Common myeloid progenitor, CD34-positive (primary cell): ENCODE measurements at regions of chr1 and their contacts with region 1.

Region 1: DNA sequence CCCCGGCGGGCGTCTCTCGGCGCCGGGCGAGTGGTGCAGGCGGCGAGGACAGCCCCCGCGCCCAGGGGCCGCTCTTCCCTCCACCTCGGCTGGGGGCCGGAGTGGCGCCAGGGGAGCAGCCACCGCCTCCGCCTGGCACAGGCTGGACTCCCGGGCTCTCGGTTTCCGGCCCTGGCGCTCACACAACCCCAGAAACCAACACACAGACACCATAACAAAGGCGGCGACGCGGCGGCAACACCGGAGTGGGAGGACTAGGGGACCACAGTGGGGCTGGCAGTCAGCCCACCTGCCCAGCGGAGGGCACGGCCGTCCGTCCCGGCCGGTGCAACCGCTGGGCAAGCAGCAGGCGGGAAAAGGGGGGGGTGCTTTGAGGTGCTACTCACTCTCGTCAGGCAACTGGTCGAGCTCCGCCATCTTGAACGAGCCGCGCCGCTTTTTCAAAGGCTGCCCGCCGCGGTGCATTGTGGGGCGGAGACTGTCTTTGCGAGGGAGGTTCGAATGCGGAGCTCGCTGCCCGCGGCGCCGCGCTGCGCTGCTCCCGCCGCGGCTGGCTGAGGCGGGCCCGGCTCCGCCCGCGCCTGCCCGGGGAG is at the start of gene LIN9:
- DNase-seq: peak; percentile 90 to 94 (median 93)
- H3K4me3 ChIP-seq: peak within 1 kb of the TSS; percentile 80 to 100 (median 97)
- H3K27ac ChIP-seq: peak within 1 kb of the TSS; percentile 58 to 88
- H3K4me1 ChIP-seq: peaks cover 4 to 29% (median 19%) of the 10 kb centered on the region in 4 experiments
- H3K27me3 ChIP-seq: no peaks in the 10 kb centered on the region

Region 2: GRCh38 chr1:226201029-226201593 is 107.7 kb before region 1 on chr1:
- CTCF ChIA-PET with region 1: no interaction called
- POLR2A ChIA-PET with region 1: no interaction called
- DNase-seq: peak; percentile 33 to 55 (median 54)
- H3K4me3 ChIP-seq: no peak overlapping the region
- H3K27ac ChIP-seq: no peak overlapping the region
- H3K4me1 ChIP-seq: peaks cover 0 to 3% (median 0%) of the 10 kb centered on the region in 4 experiments
- H3K27me3 ChIP-seq: no peaks in the 10 kb centered on the region

Region 3: DNA sequence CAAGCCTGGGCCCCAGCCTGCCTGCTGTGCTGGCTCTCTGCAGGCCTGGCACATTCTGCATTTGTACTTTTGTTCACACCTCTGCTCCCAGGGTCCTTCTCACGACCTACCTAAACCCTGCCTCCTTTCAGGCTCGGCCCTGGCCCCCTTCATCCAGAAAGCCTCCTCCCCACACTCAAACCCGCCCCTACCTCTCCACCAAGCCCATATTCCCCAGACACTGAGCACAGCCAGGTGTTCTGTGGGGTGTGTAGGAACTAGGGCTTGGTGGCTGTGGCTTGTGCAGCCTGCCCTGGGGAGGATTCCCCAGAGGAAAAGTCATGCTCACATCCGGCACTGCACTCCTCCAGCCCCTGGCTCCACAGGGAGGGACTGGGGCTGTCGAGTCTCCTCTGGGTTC is 93.6 kb before region 1 on chr1:
- CTCF ChIA-PET with region 1: no interaction called
- POLR2A ChIA-PET with region 1: no interaction called
- DNase-seq: no peak
- H3K4me3 ChIP-seq: no peak overlapping the region
- H3K27ac ChIP-seq: no peak overlapping the region
- H3K4me1 ChIP-seq: no peaks in the 10 kb centered on the region
- H3K27me3 ChIP-seq: no peaks in the 10 kb centered on the region

Region 4: GRCh38 chr1:226327761-226328162 is 18.9 kb after region 1 on chr1:
- CTCF ChIA-PET with region 1: interaction called, 32 read pairs
- POLR2A ChIA-PET with region 1: no interaction called
- DNase-seq: peak; percentile 31 to 67 (median 51)
- H3K4me3 ChIP-seq: peak overlapping the region in 1 of 7 experiments; percentile 5
- H3K27ac ChIP-seq: peak overlapping the region; percentile 40 to 52
- H3K4me1 ChIP-seq: peaks cover under 1 to 29% (median 9%) of the 10 kb centered on the region in 4 experiments
- H3K27me3 ChIP-seq: no peaks in the 10 kb centered on the region

Region 5: GRCh38 chr1:226332947-226333346 is 24.1 kb after region 1 on chr1:
- CTCF ChIA-PET with region 1: interaction called, 32 read pairs
- POLR2A ChIA-PET with region 1: no interaction called
- DNase-seq: peak in 2 of 3 donors; percentile 32 to 59
- H3K4me3 ChIP-seq: peak overlapping the region in 3 of 7 experiments; percentile 6 to 63 (median 20)
- H3K27ac ChIP-seq: no peak overlapping the region
- H3K4me1 ChIP-seq: peaks cover under 1 to 13% (median 6%) of the 10 kb centered on the region in 4 experiments
- H3K27me3 ChIP-seq: no peaks in the 10 kb centered on the region